ENCODE measurements at regions of chr22 and their contacts with region 1.

Region 1: GRCh38 chr22:45526768-45527360 is 24.2 kb downstream of the FBLN1 start:
- DNase-seq: no peak
- ATAC-seq: no peak
- H3K4me3 ChIP-seq: no peak overlapping the region
- H3K27ac ChIP-seq: no peak overlapping the region
- H3K4me1 ChIP-seq: peaks cover 0 to 9% (median 0%) of the 10 kb centered on the region in 9 donors
- H3K27me3 ChIP-seq: peaks cover 0 to 2% (median 0%) of the 10 kb centered on the region in 7 donors
- CTCF ChIP-seq: no peak

Region 2: DNA sequence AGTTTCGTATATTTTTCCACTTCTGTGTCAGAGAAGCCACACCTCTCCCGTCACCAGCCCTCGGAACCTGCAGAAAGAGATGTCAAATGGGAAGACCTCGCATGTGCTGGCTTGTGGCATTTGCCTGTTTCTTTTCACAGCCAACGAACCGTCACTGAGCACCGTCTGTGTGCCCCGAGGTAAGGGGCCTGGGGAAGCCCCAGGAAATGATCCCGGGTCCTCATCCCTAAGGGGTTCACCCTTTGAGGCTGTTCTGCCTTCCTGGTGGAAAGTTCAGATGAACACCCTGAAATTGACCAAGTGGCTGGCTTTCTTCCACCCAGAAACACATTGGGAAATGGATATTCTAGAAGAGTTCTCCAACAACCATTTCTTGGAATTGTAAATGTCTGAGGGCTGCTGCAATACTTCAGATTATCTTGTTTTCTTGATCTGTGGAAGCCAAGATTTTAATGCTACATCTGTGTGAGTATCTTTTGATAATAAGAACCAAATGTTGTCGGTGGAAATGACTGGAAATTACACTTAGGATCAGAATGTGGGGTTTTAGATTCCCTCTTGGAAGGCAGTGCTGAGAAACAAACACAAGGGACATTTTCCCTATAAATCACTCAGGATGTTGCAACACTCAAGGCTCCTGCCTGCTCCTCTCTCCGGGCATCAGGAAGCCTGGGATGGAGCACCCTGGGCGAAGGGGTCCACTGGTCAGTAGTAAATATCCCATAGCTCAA is 75.8 kb before region 1 on chr22:
- intact Hi-C with region 1: no loop called
- DNase-seq: peak in 1 of 2 donors; percentile 49
- ATAC-seq: peak; percentile 32 to 63 (median 58)
- H3K4me3 ChIP-seq: no peak overlapping the region
- H3K27ac ChIP-seq: peak overlapping the region in 9 of 10 donors; percentile 21 to 77 (median 58)
- H3K4me1 ChIP-seq: peaks cover 0 to 23% (median 3%) of the 10 kb centered on the region in 9 donors
- H3K27me3 ChIP-seq: peaks cover 0 to 15% (median 0%) of the 10 kb centered on the region in 7 donors
- CTCF ChIP-seq: no peak

Region 3: DNA sequence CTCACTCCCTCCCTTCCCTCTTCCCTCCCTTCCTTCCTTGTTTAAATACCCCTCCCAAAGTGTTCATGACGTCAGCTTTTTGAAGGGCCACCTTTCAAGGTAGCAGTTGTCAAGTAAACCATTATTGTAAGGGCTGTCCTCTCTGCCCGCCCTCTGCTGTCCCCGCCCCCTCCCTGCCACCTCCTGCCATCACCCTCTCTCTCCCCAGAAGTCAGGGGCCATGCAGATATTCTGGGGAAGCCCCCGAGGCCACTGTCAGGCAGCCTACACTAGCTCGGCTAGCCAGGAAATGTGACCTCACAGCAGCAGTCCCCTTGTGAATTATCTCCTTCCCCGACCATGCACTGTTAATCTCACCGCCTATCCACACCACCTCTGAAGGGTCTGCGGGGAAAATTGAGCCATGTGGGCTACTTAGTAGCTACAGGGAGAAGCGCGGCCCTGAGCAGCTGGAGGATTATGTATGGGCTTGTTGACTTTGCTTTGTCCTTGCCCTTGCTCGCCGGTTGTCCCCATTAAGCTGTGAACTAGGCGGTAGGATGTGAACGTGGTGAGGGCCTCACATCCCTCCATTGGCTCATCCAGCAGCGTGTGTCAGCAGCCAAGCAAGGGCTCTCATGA is 102.7 kb after region 1 on chr22:
- intact Hi-C with region 1: loop called in 1 of 10 experiments (anchors 5 kb)
- DNase-seq: no peak
- ATAC-seq: no peak
- H3K4me3 ChIP-seq: no peak overlapping the region
- H3K27ac ChIP-seq: no peak overlapping the region
- H3K4me1 ChIP-seq: peaks cover 0 to 10% (median 0%) of the 10 kb centered on the region in 9 donors
- H3K27me3 ChIP-seq: peaks cover 0 to 79% (median 55%) of the 10 kb centered on the region in 7 donors
- CTCF ChIP-seq: no peak

Measured in heart right ventricle (tissue), 16 donors.